Stomach (tissue), 19 donors: ENCODE measurements at regions of chr16 and their contacts with region 1.

Region 1: DNA sequence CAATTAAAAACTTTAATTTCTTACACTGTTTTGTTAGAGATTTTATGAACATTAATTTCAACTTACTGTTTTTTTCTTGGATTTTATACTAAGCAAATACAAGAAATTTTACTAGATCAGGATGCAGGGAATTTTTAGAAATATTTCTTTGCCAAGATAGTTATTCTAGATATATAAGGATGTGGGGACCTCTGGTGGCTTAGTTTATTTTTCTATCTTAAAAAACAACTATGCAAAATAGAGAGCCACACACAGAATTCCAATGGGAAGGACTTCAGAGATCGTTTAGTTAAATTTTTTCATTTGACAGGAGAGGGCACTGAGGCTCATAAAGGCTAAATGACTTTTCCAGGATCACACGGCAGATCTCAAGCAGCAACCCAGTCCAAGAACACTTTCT is 23.0 kb upstream of the CAPNS2 start:
- DNase-seq: peak in 1 of 2 donors; percentile 62
- H3K4me3 ChIP-seq: no peak overlapping the region
- H3K27ac ChIP-seq: no peak overlapping the region
- H3K4me1 ChIP-seq: peaks cover 0 to 8% (median 0%) of the 10 kb centered on the region in 4 donors
- H3K27me3 ChIP-seq: no peaks in the 10 kb centered on the region
- CTCF ChIP-seq: peak in 3 of 7 experiments; percentile 17 to 37 (median 27)
- EP300 ChIP-seq: no peak
- POLR2A ChIP-seq: no peak

Region 2: DNA sequence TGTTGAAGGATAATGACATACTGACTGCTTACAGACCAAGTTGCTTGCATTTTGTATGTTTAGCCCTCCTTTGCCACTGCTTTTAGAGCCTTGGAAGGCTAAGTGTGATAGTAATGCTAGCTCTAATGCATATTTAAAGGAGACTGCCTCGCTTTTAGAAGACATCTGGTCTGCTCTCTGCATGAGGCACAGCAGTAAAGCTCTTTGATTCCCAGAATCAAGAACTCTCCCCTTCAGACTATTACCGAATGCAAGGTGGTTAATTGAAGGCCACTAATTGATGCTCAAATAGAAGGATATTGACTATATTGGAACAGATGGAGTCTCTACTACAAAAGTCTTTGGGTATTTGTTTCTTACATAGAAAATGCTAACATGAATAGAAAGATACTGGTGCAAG is 42.2 kb after region 1 on chr16:
- intact Hi-C with region 1: no loop called
- DNase-seq: no peak
- H3K4me3 ChIP-seq: no peak overlapping the region
- H3K27ac ChIP-seq: no peak overlapping the region
- H3K4me1 ChIP-seq: no peaks in the 10 kb centered on the region
- H3K27me3 ChIP-seq: no peaks in the 10 kb centered on the region
- CTCF ChIP-seq: no peak
- EP300 ChIP-seq: no peak
- POLR2A ChIP-seq: no peak

Region 3: GRCh38 chr16:55701442-55702319 is 158.2 kb after region 1 on chr16:
- intact Hi-C with region 1: loop called (anchors 10 kb)
- DNase-seq: peak; percentile 74 to 76
- H3K4me3 ChIP-seq: no peak overlapping the region
- H3K27ac ChIP-seq: no peak overlapping the region
- H3K4me1 ChIP-seq: no peaks in the 10 kb centered on the region
- H3K27me3 ChIP-seq: peaks cover 0 to 15% (median 0%) of the 10 kb centered on the region in 3 donors
- CTCF ChIP-seq: peak in 5 of 7 experiments; percentile 11 to 58 (median 55)
- EP300 ChIP-seq: no peak
- POLR2A ChIP-seq: no peak